Activated B cell treated with CpG ODN at 0.5 μM for 24 hours (primary cell): ENCODE measurements at regions of chr20 and their contacts with region 1.

Region 1: GRCh38 chr20:62386383-62387218 is at the start of gene RPS21:
- DNase-seq: peak; percentile 91
- ATAC-seq: peak; percentile 87
- H3K4me3 Mint-ChIP-seq: peak within 1 kb of the TSS; percentile 89
- H3K27ac Mint-ChIP-seq: peak within 1 kb of the TSS; percentile 80
- H3K4me1 Mint-ChIP-seq: peaks cover 48% of the 10 kb centered on the region
- H3K27me3 Mint-ChIP-seq: no peaks in the 10 kb centered on the region
- CTCF ChIP-seq: no peak
- total RNA-seq, gene RPS21: 2,912 and 3,555 TPM in 2 replicates

Region 2: DNA sequence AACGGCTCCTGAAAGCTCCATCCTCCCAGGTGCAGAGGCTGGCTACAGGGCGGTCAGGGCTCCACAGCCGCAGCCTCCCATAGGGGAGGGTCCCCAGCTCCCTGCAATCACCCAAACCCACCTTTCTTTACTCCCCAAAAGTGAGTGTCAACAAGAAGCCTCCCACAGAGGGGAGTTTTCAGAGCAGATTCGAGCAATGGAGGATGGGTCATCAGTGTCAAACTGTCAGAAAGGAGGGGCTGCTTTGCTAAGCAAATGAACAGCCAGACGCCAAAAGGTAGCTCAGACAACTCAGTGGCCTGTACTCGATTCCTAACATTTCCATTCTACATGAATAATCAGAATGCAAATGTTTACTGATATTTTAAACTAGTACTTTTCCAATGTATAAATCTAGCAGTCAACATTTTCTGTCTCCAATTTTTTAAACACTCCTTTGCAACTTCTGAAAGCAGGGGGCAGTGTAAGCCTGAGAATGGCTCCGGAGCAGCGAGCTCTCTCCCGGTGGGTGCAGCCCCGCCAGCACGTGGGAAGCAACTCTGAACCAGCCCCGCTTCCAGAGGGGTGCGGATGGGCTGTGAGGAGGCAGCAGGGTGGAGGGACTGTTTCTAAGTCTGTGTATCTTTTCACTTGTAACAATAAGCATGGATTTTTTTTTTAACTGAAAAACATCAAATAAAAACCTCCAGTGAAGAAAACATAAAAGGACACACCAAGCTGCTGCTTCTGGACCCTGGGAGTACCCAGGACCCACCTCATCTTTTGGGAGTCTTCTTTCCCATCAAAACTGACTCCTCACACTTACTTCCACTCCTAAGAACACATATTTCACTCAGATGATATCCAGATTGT is 375.8 kb before region 1 on chr20:
- CTCF ChIA-PET with region 1: interaction called, 12 read pairs
- POLR2A ChIA-PET with region 1: interaction called, 10 read pairs
- intact Hi-C with region 1: no loop called
- DNase-seq: peak; percentile 27
- ATAC-seq: peak; percentile 65
- H3K4me3 Mint-ChIP-seq: no peak overlapping the region
- H3K27ac Mint-ChIP-seq: no peak overlapping the region
- H3K4me1 Mint-ChIP-seq: peaks cover 6% of the 10 kb centered on the region
- H3K27me3 Mint-ChIP-seq: no peaks in the 10 kb centered on the region
- CTCF ChIP-seq: no peak

Region 3: GRCh38 chr20:62080249-62081025 is 306.2 kb before region 1 on chr20:
- CTCF ChIA-PET with region 1: no interaction called
- POLR2A ChIA-PET with region 1: no interaction called
- intact Hi-C with region 1: no loop called
- DNase-seq: no peak
- ATAC-seq: no peak
- H3K4me3 Mint-ChIP-seq: no peak overlapping the region
- H3K27ac Mint-ChIP-seq: no peak overlapping the region
- H3K4me1 Mint-ChIP-seq: no peaks in the 10 kb centered on the region
- H3K27me3 Mint-ChIP-seq: peaks cover 6% of the 10 kb centered on the region
- CTCF ChIP-seq: no peak

Region 4: DNA sequence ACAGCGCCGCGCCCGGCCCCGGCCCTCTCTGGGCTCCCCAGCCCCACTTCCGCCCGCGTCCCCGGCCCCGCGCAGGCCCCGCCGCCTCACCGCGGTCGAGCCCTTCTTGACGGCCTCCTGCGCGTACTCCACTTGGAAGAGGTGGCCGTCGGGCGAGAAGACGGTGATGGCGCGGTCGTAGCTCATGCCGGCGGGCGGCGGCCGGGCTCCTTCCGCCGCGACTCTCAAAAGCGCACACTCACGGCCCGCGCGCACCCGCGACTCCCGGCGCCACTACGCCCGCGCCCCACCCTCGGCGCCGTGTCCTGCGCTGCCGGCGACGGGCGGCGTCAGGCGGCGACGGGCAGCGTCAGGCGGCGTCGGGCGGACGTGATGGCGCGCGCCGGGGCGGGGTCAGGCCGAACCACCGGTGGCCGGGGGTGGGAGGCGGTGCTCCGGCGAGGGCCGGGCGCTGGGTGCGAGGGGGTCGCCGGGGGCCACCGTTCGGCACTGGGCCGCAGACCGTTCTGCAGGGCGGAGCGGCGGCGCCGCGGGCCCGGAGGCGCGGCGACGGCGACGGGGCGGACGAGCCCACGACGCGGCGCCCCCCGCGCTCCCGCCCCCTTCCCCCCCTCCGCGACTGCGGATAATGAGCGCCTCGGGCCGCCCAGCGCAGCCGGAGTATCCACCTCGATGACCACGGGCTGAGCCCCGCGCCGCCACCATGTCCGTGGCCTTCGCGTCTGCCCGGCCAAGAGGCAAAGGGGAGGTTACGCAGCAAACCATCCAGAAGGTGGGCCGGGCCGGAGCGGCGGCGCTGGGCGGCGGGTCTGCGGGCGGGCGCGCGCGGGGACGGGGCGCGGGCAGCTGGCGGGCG is 243.3 kb before region 1 on chr20 and contains the starts of genes PSMA7 and SS18L1:
- CTCF ChIA-PET with region 1: no interaction called
- POLR2A ChIA-PET with region 1: interaction called, 3 read pairs
- intact Hi-C with region 1: loop called (anchors 5 kb)
- DNase-seq: peak; percentile 88
- ATAC-seq: peak; percentile 89
- H3K4me3 Mint-ChIP-seq: peak within 1 kb of the TSS; percentile 89
- H3K27ac Mint-ChIP-seq: peak within 1 kb of the TSS; percentile 78
- H3K4me1 Mint-ChIP-seq: peaks cover 36% of the 10 kb centered on the region
- H3K27me3 Mint-ChIP-seq: no peaks in the 10 kb centered on the region
- CTCF ChIP-seq: no peak
- total RNA-seq, gene PSMA7: 241 and 260 TPM in 2 replicates
- total RNA-seq, gene SS18L1: 9.0 and 9.1 TPM in 2 replicates

Region 5: DNA sequence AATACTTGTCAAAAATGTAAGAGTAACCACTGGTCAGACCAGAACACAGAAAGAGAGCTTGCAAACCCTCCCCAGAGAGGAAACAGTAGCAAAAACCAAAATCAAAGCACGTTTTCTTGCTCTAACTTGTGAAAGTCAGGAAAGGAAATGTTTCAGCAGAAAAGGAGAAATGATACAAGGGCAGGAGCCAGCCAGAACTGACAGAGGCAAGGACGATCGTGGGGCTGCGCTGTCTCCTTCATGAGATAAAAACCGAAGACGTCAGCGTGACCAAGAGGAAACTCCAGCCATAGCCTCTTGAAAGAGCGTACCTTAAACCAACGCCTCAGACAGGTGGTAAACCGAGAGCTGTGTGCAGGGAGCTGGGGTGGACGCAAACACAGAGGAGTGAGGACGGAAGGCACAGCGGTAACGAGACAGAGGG is 46.9 kb before region 1 on chr20:
- CTCF ChIA-PET with region 1: interaction called, 9 read pairs
- POLR2A ChIA-PET with region 1: interaction called, 6 read pairs
- intact Hi-C with region 1: loop called (anchors 1 kb)
- DNase-seq: peak; percentile 43
- ATAC-seq: peak; percentile 67
- H3K4me3 Mint-ChIP-seq: peak overlapping the region; percentile 86
- H3K27ac Mint-ChIP-seq: peak overlapping the region; percentile 92
- H3K4me1 Mint-ChIP-seq: peaks cover 55% of the 10 kb centered on the region
- H3K27me3 Mint-ChIP-seq: no peaks in the 10 kb centered on the region
- CTCF ChIP-seq: no peak

Region 6: DNA sequence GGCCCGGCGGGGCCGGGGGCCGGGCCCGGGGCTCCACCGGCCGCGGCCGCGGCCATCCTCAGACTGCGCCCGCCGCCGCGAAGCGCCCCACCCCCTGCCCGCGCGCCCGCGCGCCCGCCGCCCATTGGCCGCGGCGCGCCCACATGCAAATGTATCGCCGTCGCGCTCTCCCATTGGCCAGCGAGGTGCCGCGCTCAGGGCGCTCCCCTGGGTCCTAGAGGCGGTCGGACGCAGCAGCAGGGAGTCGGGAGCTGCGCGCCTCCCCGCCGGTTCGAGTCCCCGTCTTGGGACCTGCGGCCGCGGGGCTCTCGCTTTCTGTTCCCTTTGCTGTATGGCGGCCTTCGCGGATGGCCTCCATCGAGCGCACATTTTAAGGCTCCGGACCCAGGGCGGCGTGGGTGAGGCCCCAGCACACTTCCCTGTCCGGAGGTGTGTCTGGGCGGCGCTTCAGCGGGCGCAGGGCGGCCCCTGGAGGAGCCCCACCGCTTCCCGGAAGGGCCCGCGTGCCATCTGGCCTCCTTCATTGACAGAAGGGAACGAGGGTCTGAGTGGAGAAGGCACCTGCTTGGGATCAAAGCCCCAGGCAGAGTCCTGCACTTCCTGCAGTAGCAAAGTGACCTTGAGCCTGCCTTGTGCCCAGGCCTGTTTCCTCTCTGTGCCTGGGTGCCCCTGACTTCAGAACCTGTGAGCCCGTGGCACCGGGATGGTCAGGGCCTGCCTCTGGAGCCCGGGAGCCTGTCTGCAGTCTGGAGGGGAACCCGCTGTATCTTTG is 20.8 kb after region 1 on chr20 and contains the start of gene CABLES2:
- CTCF ChIA-PET with region 1: no interaction called
- POLR2A ChIA-PET with region 1: interaction called, 4 read pairs
- intact Hi-C with region 1: loop called (anchors 1 kb)
- DNase-seq: peak; percentile 90
- ATAC-seq: peak; percentile 90
- H3K4me3 Mint-ChIP-seq: peak within 1 kb of the TSS; percentile 88
- H3K27ac Mint-ChIP-seq: peak within 1 kb of the TSS; percentile 86
- H3K4me1 Mint-ChIP-seq: peaks cover 36% of the 10 kb centered on the region
- H3K27me3 Mint-ChIP-seq: no peaks in the 10 kb centered on the region
- CTCF ChIP-seq: no peak
- total RNA-seq, gene CABLES2: 6.6 and 7.0 TPM in 2 replicates

Region 7: GRCh38 chr20:62808211-62808865 is 421.7 kb after region 1 on chr20:
- CTCF ChIA-PET with region 1: no interaction called
- POLR2A ChIA-PET with region 1: interaction called, 3 read pairs
- intact Hi-C with region 1: loop called (anchors 2 kb)
- DNase-seq: peak; percentile 75
- ATAC-seq: peak; percentile 56
- H3K4me3 Mint-ChIP-seq: peak overlapping the region; percentile 48
- H3K27ac Mint-ChIP-seq: peak overlapping the region; percentile 69
- H3K4me1 Mint-ChIP-seq: peaks cover 31% of the 10 kb centered on the region
- H3K27me3 Mint-ChIP-seq: no peaks in the 10 kb centered on the region
- CTCF ChIP-seq: peak; percentile 48